ENCODE measurements at regions of chr11 and their contacts with region 1.

Region 1: GRCh38 chr11:86592659-86593451 is 79.6 kb downstream of the ME3 start:
- DNase-seq: peak; percentile 74
- H3K4me3 Mint-ChIP-seq: no peak overlapping the region
- H3K27ac Mint-ChIP-seq: peak overlapping the region; percentile 81
- H3K4me1 Mint-ChIP-seq: peaks cover 43% of the 10 kb centered on the region
- H3K27me3 Mint-ChIP-seq: no peaks in the 10 kb centered on the region

Region 2: DNA sequence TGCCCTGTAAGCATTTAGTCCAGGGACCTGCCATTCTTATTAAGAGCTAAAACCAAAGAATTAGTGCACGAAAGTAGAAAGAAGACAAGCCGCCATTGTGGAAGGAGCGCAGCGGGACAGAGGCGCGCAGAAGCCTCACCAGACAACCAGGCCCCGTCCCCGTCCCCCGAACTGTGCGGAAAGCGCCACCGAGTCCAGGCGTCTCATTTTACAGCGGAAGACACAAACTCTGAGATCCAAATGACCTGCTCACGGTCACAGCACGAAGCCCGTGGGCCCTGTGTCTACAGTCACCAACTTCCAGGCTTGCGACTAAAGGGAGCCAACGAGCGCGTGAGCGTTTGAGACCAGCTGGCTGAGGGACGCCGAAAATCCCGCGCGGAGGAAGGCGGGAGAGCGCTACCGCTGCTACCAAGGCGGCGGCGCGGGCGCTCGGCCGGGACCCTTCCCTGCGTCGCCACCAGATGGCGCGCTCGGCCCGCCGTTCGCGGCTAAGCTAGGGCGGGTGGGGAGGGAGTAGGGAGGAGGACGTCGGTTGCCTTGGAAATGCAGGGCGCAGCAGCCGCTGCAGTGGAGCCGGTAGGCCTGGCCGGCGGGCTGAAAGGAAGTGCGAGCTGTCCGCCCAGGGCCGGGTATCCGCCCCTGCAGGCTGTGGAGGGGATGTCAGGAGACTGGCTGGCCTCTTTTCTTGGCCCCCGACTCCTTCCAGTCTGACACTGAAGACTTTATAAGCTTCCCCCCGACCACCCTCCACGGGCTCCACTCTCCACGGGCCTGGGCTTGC is 738.1 kb before region 1 on chr11:
- intact Hi-C with region 1: loop called (anchors 10 kb)
- DNase-seq: peak; percentile 87
- H3K4me3 Mint-ChIP-seq: peak overlapping the region; percentile 84
- H3K27ac Mint-ChIP-seq: peak overlapping the region; percentile 90
- H3K4me1 Mint-ChIP-seq: peaks cover 13% of the 10 kb centered on the region
- H3K27me3 Mint-ChIP-seq: peaks cover 3% of the 10 kb centered on the region

Region 3: DNA sequence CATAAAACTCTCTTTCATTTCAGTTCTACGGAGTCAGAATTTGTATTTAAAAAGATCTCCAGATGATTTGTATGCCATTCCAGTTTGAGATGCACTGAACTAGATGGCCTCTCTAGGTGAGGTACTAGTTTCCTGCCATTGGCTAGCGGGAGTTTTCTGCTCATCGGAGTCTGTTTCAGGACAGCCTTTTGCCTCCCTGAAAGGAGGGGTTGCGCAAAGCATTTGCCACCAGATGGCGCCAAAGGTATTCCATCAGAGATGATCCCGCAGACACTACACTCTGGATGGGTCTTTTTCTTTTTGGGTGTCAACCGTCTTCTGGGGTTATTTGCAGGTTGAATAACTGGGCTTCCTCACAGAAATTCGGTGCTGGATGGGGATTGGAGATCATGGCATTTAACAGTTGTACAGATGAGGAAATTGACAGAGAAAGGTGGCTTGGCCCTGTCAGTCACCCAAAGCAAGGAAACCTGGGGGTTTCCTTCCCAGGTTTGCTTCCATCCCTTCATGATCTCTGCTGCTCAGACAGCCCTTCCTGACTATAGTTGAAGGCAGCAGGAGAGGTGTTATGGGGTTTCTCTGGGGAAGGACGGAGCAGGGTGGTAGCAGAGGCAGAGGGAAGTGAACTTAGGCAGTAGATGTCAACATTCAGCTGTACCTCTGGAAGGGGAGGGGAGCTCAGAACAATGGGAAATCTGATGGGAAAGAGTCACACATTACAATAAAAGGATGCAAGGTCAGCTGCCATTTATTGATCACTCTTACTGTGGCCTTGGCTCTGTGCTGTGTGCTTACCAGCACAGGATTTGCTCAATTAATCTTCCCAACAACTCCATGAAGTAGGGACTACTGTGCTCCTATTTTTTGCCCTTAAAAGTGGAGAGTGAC is 136.6 kb before region 1 on chr11:
- intact Hi-C with region 1: loop called (anchors 2 kb)
- DNase-seq: peak; percentile 56
- H3K4me3 Mint-ChIP-seq: no peak overlapping the region
- H3K27ac Mint-ChIP-seq: no peak overlapping the region
- H3K4me1 Mint-ChIP-seq: peaks cover 27% of the 10 kb centered on the region
- H3K27me3 Mint-ChIP-seq: no peaks in the 10 kb centered on the region

Region 4: DNA sequence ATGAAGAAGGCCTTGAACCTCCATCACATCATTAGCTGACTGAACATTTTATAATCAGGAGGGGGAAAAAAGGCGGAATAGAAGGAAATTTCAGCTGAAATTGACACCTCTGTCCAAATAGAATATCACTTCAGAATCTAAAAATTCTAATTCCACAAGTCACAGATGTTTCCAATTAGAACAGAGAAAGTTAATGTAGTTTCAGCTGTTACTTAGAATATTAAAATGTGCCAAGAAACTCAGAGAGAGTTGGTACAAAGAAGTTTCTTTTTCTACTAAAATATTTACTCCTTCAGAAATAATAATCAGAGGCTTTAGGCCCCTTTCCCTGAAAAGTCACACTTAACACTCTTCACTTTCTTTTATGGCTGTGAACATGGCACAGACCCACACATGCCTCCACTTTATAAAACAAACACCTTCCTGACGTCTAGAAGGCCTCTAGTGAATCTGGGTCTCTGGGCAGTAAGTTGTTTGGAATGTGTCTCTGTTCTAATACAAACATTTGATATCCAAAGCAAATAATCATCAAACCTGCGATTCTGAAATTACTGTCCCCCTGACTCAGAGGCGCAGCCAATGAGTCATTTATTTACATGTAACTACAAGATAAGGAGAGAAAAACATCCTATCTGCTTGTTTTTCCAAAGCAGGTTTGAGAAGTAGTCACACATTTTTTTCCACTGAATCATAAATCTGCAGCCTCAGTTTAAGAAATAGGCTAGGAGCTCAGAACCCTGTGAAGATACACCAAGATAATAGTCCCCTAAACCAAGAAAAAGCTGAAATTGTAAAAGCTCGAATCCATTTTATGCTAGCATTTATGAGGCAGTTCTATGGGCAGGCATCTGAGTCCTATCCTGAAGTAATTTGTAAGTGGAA is 68.9 kb before region 1 on chr11:
- intact Hi-C with region 1: loop called (anchors 1 kb)
- DNase-seq: no peak
- H3K4me3 Mint-ChIP-seq: no peak overlapping the region
- H3K27ac Mint-ChIP-seq: peak overlapping the region; percentile 62
- H3K4me1 Mint-ChIP-seq: peaks cover 26% of the 10 kb centered on the region
- H3K27me3 Mint-ChIP-seq: peaks cover 3% of the 10 kb centered on the region

Region 5: GRCh38 chr11:86537541-86538222 is 55.2 kb before region 1 on chr11:
- intact Hi-C with region 1: no loop called
- DNase-seq: no peak
- H3K4me3 Mint-ChIP-seq: no peak overlapping the region
- H3K27ac Mint-ChIP-seq: no peak overlapping the region
- H3K4me1 Mint-ChIP-seq: peaks cover 3% of the 10 kb centered on the region
- H3K27me3 Mint-ChIP-seq: no peaks in the 10 kb centered on the region

Region 6: DNA sequence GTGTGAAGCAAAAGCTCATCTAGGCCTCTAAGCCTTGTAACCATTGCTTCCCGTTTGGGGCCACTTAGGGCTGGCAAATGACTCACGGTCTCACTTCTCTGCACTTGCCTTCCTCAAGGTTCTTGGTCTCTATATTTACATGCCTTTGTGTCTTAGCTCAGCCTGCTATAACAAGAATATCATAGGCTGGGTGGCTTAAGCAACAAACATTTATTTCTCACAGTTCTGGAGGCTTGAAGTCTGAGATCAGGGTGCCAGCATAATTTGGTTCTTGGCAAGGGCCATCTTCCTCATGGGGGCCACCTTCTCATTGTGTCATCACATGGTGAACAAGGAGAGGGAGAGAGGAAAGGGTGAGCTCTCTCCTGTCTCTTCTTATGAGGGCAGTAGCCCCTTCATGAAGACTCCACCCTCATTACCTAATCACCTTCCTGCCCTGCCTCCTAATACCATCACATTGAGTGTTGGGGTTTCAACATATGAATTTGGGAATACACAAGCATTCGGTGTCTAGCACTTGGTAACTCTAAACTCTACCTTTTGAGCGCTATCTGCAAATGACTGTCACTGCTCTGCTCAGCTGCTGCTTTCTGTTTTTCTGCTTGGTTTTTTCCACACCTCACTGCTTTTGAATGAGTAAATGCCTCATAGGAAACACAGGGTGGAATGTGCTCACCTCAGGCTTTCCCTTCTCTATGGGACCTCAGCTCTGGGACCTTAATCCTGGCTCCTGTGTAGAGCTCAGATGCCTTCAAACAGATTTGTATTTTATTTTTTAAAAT is 95.7 kb after region 1 on chr11:
- intact Hi-C with region 1: loop called (anchors 5 kb)
- DNase-seq: no peak
- H3K4me3 Mint-ChIP-seq: peak overlapping the region; percentile 61
- H3K27ac Mint-ChIP-seq: peak overlapping the region; percentile 92
- H3K4me1 Mint-ChIP-seq: peaks cover 24% of the 10 kb centered on the region
- H3K27me3 Mint-ChIP-seq: peaks cover 6% of the 10 kb centered on the region

Region 7: DNA sequence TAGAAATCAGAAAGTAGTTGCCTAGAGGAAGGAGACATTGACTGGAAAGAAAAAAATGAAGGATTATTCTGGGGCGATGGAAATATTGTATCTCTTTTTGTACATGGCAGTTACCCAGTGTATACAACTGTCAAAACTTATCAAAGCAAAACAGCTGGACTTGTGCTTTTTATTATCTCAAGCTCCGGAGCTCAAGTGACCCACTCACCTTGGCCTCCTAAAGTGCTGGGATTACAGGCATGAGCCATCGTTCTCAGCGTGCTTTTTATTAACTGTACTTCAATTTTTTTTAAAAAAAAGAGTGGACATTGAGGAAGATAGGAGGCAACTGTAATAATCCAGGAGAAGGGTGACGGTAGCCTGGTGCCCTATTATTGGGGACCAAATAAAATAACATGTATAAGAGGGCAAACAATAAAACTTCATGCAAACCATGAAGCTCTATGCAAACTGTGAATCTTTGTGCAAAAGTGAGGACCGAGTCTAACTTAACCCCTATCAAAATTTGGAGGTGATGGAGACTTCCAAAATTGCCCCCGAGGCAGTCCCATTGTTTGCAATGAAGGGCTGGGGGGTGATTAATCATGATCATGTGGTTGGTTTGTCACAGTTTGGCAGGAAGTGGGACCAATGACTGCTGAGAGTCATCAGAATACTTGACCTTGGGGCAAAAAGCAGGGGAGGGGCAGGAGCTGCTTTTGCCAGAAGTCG is 338.8 kb after region 1 on chr11:
- intact Hi-C with region 1: no loop called
- DNase-seq: no peak
- H3K4me3 Mint-ChIP-seq: no peak overlapping the region
- H3K27ac Mint-ChIP-seq: no peak overlapping the region
- H3K4me1 Mint-ChIP-seq: no peaks in the 10 kb centered on the region
- H3K27me3 Mint-ChIP-seq: peaks cover 1% of the 10 kb centered on the region